Caco-2 (cell line): ENCODE measurements at regions of chr17 and their contacts with region 1.

Region 1: GRCh38 chr17:30506481-30506880 is 29.3 kb downstream of the GOSR1 start:
- DNase-seq: no peak
- H3K4me3 ChIP-seq: no peak overlapping the region
- H3K4me3 Mint-ChIP-seq: no peak overlapping the region
- H3K27ac Mint-ChIP-seq: no peak overlapping the region
- H3K4me1 ChIP-seq: peaks cover 8% of the 10 kb centered on the region; the same call in 1 of the 2 replicates
- H3K4me1 Mint-ChIP-seq: peaks cover 8% of the 10 kb centered on the region
- H3K27me3 ChIP-seq: no peaks in the 10 kb centered on the region
- H3K27me3 Mint-ChIP-seq: no peaks in the 10 kb centered on the region
- CTCF ChIP-seq: no peak

Region 2: GRCh38 chr17:30600049-30600829 is 93.8 kb after region 1 on chr17:
- CTCF ChIA-PET with region 1: no interaction called
- POLR2A ChIA-PET with region 1: interaction called, 3 read pairs
- intact Hi-C with region 1: loop called (anchors 5 kb)
- DNase-seq: peak; percentile 86 to 92
- H3K4me3 ChIP-seq: peak overlapping the region; percentile 91
- H3K4me3 Mint-ChIP-seq: peak overlapping the region; percentile 95
- H3K27ac Mint-ChIP-seq: peak overlapping the region; percentile 87
- H3K4me1 ChIP-seq: peaks cover 4% of the 10 kb centered on the region; the same call in 1 of the 2 replicates
- H3K4me1 Mint-ChIP-seq: peaks cover 14% of the 10 kb centered on the region
- H3K27me3 ChIP-seq: no peaks in the 10 kb centered on the region
- H3K27me3 Mint-ChIP-seq: no peaks in the 10 kb centered on the region
- CTCF ChIP-seq: peak; percentile 68 to 70